SK-N-SH (cell line): ENCODE measurements at regions of chr1 and their contacts with region 1.

Region 1: GRCh38 chr1:54791880-54792522 is 9.1 kb downstream of the TTC22 start:
- DNase-seq: peak; percentile 63
- H3K4me3 ChIP-seq: no peak overlapping the region
- H3K27ac ChIP-seq: no peak overlapping the region; a peak in 1 of 4 replicates
- H3K4me1 ChIP-seq: peaks cover 5 to 40% of the 10 kb centered on the region in 2 experiments; a peak in 2 of 4 replicates
- H3K27me3 ChIP-seq: no peaks in the 10 kb centered on the region
- CTCF ChIP-seq: peak; percentile 62
- EP300 ChIP-seq: no peak
- RAD21 ChIP-seq: peak; percentile 65

Region 2: DNA sequence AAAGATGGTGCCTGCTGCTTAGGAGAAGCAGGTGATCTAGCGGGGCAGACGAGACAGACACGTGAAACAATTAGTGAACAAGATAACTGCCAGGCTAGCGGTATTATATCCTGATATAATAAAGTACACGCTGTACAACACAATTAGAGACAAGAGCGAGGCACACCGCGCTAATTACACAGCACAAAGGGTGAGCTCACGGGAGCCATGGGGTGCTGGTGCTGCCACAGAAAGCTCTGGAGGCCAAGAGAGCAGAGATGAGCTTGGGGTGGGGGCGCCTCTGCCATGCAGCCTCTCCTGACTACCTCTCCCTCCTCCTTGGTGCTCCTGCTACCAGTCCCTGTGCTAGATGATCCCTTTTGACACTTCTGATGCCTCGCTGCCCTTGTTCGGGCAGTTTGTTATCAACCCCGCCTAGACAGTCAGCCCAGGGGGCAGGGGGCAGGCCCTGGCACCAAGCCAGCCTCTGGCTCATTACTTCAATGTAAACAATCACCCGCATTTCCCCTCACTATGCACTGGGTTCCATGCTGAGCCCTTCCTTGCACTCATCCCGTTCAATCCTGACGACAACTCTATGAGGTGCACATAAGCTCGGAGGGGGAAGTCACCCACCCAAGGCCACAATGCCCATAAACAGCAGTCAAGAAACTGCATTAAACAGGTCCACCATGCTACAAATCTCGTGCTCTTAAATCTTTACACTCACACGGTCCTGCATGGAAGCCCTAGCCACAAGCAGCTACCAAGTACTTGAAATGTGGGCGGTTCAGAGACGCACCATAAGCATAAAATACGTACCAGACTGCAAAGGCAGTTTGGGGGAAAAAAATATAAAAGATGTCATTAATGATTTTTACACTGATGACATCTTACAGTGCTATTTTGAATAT is 488.8 kb before region 1 on chr1:
- CTCF ChIA-PET with region 1: no interaction called
- POLR2A ChIA-PET with region 1: no interaction called
- DNase-seq: peak; percentile 60
- H3K4me3 ChIP-seq: no peak overlapping the region
- H3K27ac ChIP-seq: peak overlapping the region in 1 of 2 experiments; percentile 62; a peak in 2 of 4 replicates
- H3K4me1 ChIP-seq: peaks cover 0 to 76% of the 10 kb centered on the region in 2 experiments; a peak in 1 of 4 replicates
- H3K27me3 ChIP-seq: no peaks in the 10 kb centered on the region
- CTCF ChIP-seq: no peak
- EP300 ChIP-seq: no peak
- RAD21 ChIP-seq: no peak

Region 3: GRCh38 chr1:54681358-54681757 is 110.6 kb before region 1 on chr1:
- CTCF ChIA-PET with region 1: interaction called, 11 read pairs
- POLR2A ChIA-PET with region 1: no interaction called
- DNase-seq: peak; percentile 45
- H3K4me3 ChIP-seq: no peak overlapping the region
- H3K27ac ChIP-seq: no peak overlapping the region
- H3K4me1 ChIP-seq: no peaks in the 10 kb centered on the region; a peak in 1 of 4 replicates
- H3K27me3 ChIP-seq: no peaks in the 10 kb centered on the region
- CTCF ChIP-seq: no peak
- EP300 ChIP-seq: no peak
- RAD21 ChIP-seq: no peak

Region 4: GRCh38 chr1:54764133-54764921 is 27.7 kb before region 1 on chr1 and contains the start of gene PARS2:
- CTCF ChIA-PET with region 1: interaction called, 17 read pairs
- POLR2A ChIA-PET with region 1: no interaction called
- DNase-seq: peak; percentile 97
- H3K4me3 ChIP-seq: peak within 1 kb of the TSS; percentile 94
- H3K27ac ChIP-seq: peak within 1 kb of the TSS; percentile 77 to 79
- H3K4me1 ChIP-seq: peaks cover 8 to 12% of the 10 kb centered on the region in 2 experiments; a peak in 3 of 4 replicates
- H3K27me3 ChIP-seq: no peaks in the 10 kb centered on the region
- CTCF ChIP-seq: no peak
- EP300 ChIP-seq: no peak; a peak in 1 of 4 replicates
- RAD21 ChIP-seq: no peak
- polyA plus RNA-seq, gene PARS2: 3.2 and 3.4 TPM in 2 replicates

Region 5: DNA sequence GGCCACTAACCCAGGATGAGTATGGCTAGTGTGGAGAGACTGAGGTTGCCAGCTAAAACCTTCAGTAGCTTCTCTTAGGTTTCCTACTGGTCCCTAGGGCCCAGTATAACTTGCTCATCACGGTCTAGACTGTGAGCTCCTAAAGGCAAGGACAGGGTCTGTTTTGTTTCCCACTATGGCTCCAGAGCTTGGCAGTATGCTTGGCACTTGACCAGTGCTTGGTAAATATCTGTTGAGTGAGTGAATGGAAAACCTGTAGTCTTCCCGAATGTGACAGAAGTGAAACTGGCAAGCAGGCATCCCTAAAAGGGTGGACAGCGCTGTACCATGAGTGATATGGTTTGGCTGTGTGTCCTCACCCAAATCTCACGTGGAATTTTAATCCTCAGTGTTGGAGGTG is 14.6 kb before region 1 on chr1:
- CTCF ChIA-PET with region 1: interaction called, 19 read pairs
- POLR2A ChIA-PET with region 1: interaction called, 3 read pairs
- DNase-seq: no peak
- H3K4me3 ChIP-seq: no peak overlapping the region
- H3K27ac ChIP-seq: no peak overlapping the region
- H3K4me1 ChIP-seq: peaks cover 0 to 3% of the 10 kb centered on the region in 2 experiments; a peak in 1 of 4 replicates
- H3K27me3 ChIP-seq: no peaks in the 10 kb centered on the region; the same call in 1 of the 2 replicates
- CTCF ChIP-seq: no peak
- EP300 ChIP-seq: no peak
- RAD21 ChIP-seq: no peak

Region 6: GRCh38 chr1:54810100-54810942 is 18.3 kb after region 1 on chr1:
- CTCF ChIA-PET with region 1: interaction called, 13 read pairs
- POLR2A ChIA-PET with region 1: no interaction called
- DNase-seq: peak; percentile 93
- H3K4me3 ChIP-seq: no peak overlapping the region; a peak in 1 of 4 replicates
- H3K27ac ChIP-seq: no peak overlapping the region
- H3K4me1 ChIP-seq: peaks cover 0 to 2% of the 10 kb centered on the region in 2 experiments; a peak in 1 of 4 replicates
- H3K27me3 ChIP-seq: no peaks in the 10 kb centered on the region
- CTCF ChIP-seq: peak; percentile 86
- EP300 ChIP-seq: no peak
- RAD21 ChIP-seq: peak; percentile 99